ENCODE measurements at regions of chr12 and their contacts with region 1.

Region 1: GRCh38 chr12:68482660-68483059 is 128.0 kb upstream of the RAP1B start:
- DNase-seq: peak; percentile 84
- H3K4me3 Mint-ChIP-seq: peak overlapping the region; percentile 46
- H3K27ac Mint-ChIP-seq: peak overlapping the region; percentile 92
- H3K4me1 Mint-ChIP-seq: peaks cover 34% of the 10 kb centered on the region
- H3K27me3 Mint-ChIP-seq: no peaks in the 10 kb centered on the region

Region 2: DNA sequence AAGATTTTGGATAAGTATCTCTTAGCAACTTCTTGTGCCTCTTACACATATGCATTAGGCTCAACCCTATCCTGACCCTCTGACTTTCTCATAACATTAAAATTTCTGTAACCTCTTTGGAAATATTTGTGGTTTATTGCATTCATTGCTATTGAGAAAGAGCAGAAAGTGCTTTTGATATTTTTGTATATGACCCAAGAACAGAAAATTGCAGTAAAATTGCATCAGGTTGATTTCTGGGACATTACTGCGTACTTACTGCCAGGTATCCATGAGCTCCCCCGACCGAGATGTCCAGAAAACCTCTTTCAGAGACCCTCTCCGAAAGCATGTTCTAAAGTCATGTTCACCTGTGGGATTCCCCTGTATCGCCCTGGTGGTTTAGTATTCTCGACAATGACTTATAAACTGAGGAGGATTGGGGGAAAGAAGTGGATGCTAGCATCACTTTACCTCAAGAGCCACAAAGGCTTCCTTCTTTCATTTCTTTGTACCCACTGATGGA is 214.7 kb before region 1 on chr12:
- intact Hi-C with region 1: loop called (anchors 10 kb)
- DNase-seq: peak; percentile 79
- H3K4me3 Mint-ChIP-seq: peak overlapping the region; percentile 29
- H3K27ac Mint-ChIP-seq: peak overlapping the region; percentile 73
- H3K4me1 Mint-ChIP-seq: peaks cover 45% of the 10 kb centered on the region
- H3K27me3 Mint-ChIP-seq: peaks cover 8% of the 10 kb centered on the region

Region 3: DNA sequence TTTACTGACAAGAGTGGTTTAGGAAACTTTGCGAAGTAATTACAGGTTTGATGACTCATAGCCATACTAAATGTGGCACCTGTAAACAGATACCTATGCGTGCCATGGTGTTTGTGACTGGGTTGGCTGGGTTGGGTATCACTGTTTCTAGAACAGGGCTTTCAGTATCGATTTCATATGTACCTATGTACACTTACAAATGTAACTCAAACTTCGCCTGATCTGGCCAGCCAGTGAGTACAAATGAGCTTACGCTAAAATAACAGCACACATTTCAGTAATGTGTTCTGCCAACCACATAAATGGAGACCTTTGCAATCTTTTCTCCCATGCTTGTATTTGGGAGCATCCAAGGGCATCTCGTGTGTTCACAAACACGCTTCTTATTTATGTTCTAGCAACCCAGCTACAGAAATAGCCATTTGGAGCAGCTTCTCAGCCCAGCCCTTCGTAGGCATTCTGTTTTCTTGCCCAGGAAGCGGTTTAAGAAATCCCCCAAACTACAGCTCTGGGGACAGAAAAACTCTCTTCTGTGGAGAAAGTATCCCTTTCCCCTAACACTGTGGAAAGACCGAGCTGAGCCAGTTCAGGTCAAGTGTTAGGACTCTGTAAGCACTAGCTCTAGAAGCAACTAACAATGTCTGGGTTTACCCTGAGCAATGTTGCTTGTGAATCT is 108.2 kb before region 1 on chr12:
- intact Hi-C with region 1: loop called (anchors 1 kb)
- DNase-seq: peak; percentile 87
- H3K4me3 Mint-ChIP-seq: peak overlapping the region; percentile 68
- H3K27ac Mint-ChIP-seq: peak overlapping the region; percentile 90
- H3K4me1 Mint-ChIP-seq: peaks cover 41% of the 10 kb centered on the region
- H3K27me3 Mint-ChIP-seq: no peaks in the 10 kb centered on the region

Region 4: GRCh38 chr12:68538726-68539614 is 56.3 kb after region 1 on chr12:
- intact Hi-C with region 1: loop called (anchors 5 kb)
- DNase-seq: peak; percentile 90
- H3K4me3 Mint-ChIP-seq: peak overlapping the region; percentile 57
- H3K27ac Mint-ChIP-seq: peak overlapping the region; percentile 40
- H3K4me1 Mint-ChIP-seq: peaks cover 35% of the 10 kb centered on the region
- H3K27me3 Mint-ChIP-seq: no peaks in the 10 kb centered on the region

Region 5: DNA sequence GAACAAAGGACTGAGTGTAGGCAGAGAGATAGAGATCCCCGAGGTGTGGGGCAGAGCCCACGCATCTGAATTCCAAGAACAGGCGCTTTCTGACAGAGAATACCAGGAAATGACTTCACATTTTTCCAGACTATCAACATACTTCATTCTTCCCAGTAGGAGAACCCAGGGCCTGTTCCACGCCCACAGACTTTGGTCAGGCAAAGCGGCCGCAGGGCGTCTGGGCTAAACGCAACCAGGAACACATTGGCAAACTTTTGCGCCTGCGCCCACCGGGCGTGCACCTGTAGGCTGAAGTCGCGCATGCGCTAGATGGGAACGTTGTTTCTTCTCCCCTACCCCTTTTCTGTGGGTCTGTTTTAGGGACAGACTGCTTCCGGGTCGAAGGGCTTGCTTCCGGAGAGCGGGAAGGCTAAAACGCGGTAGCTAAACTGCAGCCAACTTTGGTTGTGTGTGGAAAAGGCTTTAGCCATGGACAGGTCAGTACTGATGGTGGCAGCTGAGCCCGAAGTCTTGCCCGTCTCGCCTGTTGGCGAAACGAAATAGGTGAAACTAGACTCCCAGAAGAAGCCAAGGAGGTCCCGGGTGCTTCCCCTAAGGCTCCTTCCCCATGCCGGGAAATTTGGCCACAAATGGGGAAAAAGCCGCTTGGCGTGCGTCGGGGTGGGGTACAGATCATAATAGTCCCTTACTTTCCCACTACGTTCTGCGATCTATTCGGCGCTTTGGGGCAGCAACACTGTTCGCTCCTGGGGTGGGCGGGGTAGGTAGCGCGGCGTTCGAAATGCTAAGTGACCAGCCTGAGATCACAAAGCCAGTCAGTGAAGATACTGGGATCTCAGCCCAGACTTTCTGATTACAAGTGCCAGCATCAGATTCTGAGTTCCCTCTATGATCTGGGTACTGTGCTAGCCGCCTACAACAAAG is 204.2 kb after region 1 on chr12 and contains the start of gene NUP107:
- intact Hi-C with region 1: loop called (anchors 5 kb)
- DNase-seq: peak; percentile 99
- H3K4me3 Mint-ChIP-seq: peak within 1 kb of the TSS; percentile 95
- H3K27ac Mint-ChIP-seq: peak within 1 kb of the TSS; percentile 92
- H3K4me1 Mint-ChIP-seq: peaks cover 33% of the 10 kb centered on the region
- H3K27me3 Mint-ChIP-seq: no peaks in the 10 kb centered on the region
- total RNA-seq, gene NUP107: 127 and 128 TPM in 2 replicates

Measured in activated CD4-positive, alpha-beta T cell treated with anti-CD3 and anti-CD28 coated beads, Interleukin-2, amount 10 ng/mL, durations not matched to agents 24 days and 14 days (primary cell).